ENCODE measurements at regions of chr17 and their contacts with region 1.

Region 1: DNA sequence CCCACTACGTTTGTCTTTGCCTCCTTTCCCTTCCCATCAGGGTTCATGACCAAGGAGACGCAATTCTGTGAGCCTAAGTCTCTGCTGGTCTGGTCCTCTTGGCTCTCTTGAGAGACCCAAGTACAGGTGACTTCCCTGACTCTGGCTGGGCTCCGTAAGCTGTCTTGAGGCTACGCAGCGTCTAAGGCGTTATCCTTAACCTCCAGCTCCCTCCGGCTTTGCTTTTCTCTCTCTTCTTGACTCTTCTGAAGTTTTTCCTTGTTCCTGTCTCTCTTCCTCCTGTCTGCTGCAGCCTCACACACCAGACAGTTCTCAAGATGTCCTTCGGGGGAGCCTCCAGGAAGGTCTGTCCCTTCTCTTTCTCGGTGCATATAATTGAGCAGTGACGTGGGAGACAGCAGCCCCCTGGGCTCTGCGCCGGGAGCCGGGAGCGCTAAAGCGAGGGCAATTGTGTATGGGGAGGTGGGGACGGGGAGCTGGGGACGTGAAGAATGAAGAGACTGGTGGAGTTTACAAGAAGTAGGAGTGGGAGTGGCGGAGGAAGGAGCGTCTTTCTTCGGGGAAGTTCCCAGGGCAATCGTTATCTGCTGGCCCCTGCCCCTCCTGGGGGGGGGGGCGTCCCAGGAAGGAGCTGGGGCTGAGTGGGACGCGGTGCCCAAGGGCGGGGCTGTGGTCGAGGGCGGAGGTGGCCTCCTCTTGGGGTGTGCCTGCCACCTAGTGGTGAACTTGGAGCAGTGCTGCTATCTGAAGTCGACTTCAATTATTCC is 6.9 kb upstream of the PIRT start:
- DNase-seq: peak; percentile 82
- H3K4me3 ChIP-seq: peak overlapping the region; percentile 34
- H3K27ac ChIP-seq: no peak overlapping the region
- H3K4me1 ChIP-seq: peaks cover 4% of the 10 kb centered on the region
- H3K27me3 ChIP-seq: peaks cover 20% of the 10 kb centered on the region
- CTCF ChIP-seq: peak; percentile 92

Region 2: DNA sequence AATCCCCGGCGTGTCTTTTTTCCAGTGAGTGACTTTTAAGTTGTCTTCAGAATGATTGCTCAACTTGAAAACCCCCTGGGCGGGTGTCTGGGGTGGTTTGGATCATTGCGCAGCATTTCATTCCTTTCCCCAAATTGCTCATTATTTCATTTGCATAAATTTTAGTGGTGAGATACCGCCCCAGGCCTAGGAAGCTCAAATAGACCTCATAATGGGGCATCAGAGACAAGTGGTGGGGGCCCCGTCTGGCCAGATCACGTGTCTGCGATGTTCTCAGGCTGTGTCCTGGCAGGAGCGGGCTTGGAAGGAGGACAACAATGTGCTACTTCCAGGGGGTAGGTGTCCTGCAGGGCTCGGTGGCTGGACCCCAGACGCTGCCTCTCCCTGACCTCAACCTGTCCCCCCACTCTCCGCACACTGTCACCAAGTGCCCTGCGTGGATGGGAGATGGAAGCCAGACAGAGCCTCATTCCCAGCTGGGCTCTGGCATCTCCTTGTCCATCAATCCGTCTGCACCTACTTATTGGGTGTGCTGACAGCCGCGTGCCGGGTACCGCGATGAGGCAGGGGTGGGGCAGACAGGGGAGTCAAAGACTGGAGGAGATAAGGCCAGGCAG is 1706.6 kb before region 1 on chr17:
- CTCF ChIA-PET with region 1: no interaction called
- POLR2A ChIA-PET with region 1: no interaction called
- intact Hi-C with region 1: no loop called
- DNase-seq: peak; percentile 74
- H3K4me3 ChIP-seq: no peak overlapping the region
- H3K27ac ChIP-seq: no peak overlapping the region
- H3K4me1 ChIP-seq: peaks cover 9% of the 10 kb centered on the region
- H3K27me3 ChIP-seq: no peaks in the 10 kb centered on the region
- CTCF ChIP-seq: no peak

Region 3: GRCh38 chr17:10646392-10646990 is 198.3 kb before region 1 on chr17:
- CTCF ChIA-PET with region 1: interaction called, 8 read pairs
- POLR2A ChIA-PET with region 1: no interaction called
- intact Hi-C with region 1: loop called (anchors 2 kb)
- DNase-seq: peak; percentile 67
- H3K4me3 ChIP-seq: no peak overlapping the region
- H3K27ac ChIP-seq: no peak overlapping the region
- H3K4me1 ChIP-seq: no peaks in the 10 kb centered on the region
- H3K27me3 ChIP-seq: no peaks in the 10 kb centered on the region
- CTCF ChIP-seq: peak; percentile 82

Region 4: GRCh38 chr17:10737168-10737622 is 107.6 kb before region 1 on chr17:
- CTCF ChIA-PET with region 1: interaction called, 15 read pairs
- POLR2A ChIA-PET with region 1: no interaction called
- intact Hi-C with region 1: loop called (anchors 1 kb)
- DNase-seq: peak; percentile 79
- H3K4me3 ChIP-seq: no peak overlapping the region
- H3K27ac ChIP-seq: no peak overlapping the region
- H3K4me1 ChIP-seq: no peaks in the 10 kb centered on the region
- H3K27me3 ChIP-seq: peaks cover 8% of the 10 kb centered on the region
- CTCF ChIP-seq: peak; percentile 90

Region 5: GRCh38 chr17:10754109-10754508 is 90.7 kb before region 1 on chr17:
- CTCF ChIA-PET with region 1: interaction called, 4 read pairs
- POLR2A ChIA-PET with region 1: no interaction called
- intact Hi-C with region 1: loop called (anchors 1 kb)
- DNase-seq: peak; percentile 59
- H3K4me3 ChIP-seq: no peak overlapping the region
- H3K27ac ChIP-seq: no peak overlapping the region
- H3K4me1 ChIP-seq: no peaks in the 10 kb centered on the region
- H3K27me3 ChIP-seq: peaks cover 57% of the 10 kb centered on the region
- CTCF ChIP-seq: peak; percentile 60

Measured in A673 (cell line).